CD4-positive, alpha-beta T cell (primary cell): ENCODE measurements at regions of chr3 and their contacts with region 1.

Region 1: GRCh38 chr3:68057637-68058320 is 403.4 kb upstream of the SUCLG2 start:
- DNase-seq: peak; percentile 43 to 92 (median 55)
- ATAC-seq: peak; percentile 98
- H3K4me3 ChIP-seq: peak overlapping the region; percentile 28
- H3K4me3 Mint-ChIP-seq: peak overlapping the region; percentile 80
- H3K27ac ChIP-seq: peak overlapping the region in 1 of 2 donors; percentile 3
- H3K27ac Mint-ChIP-seq: peak overlapping the region; percentile 83
- H3K4me1 ChIP-seq: peaks cover 30% of the 10 kb centered on the region
- H3K4me1 Mint-ChIP-seq: peaks cover 77% of the 10 kb centered on the region
- H3K27me3 ChIP-seq: no peaks in the 10 kb centered on the region
- H3K27me3 Mint-ChIP-seq: no peaks in the 10 kb centered on the region
- CTCF ChIP-seq: no peak

Region 2: DNA sequence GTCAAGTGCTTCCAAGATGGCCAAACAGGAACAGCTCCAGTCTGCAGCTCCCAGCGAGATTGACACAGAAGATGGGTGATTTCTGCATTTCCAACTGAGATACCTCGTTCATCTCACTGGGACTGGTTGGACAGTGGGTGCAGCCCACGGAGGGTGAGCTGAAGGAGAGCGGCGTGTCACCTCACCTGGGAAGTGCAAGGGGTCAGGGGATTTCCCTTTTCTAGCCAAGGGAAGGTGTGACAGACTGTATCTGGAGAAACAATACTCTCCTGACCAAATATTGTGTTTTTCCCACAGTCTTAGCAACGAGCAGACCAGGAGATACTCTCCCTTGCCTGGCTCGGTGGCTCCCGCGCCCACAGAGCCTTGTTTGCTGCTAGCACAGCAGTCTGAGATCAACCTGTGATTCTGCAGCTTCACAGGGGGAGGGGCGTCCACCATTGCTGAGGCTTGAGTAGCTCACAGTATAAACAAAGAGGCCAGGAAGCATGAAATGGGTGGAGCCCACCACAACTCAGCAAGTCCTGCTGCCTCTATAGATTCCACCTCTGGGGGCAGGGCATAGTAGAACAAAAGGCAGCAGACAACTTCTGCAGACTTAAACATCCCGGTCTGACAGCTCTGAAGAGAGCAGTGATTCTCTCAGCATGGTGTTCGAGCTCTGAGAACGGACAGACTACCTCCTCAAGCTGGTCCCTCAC is 109.8 kb before region 1 on chr3:
- CTCF ChIA-PET with region 1: no interaction called
- POLR2A ChIA-PET with region 1: interaction called, 18 read pairs
- intact Hi-C with region 1: no loop called
- DNase-seq: peak; percentile 52 to 89 (median 67)
- ATAC-seq: peak; percentile 95
- H3K4me3 ChIP-seq: peak overlapping the region; percentile 49
- H3K4me3 Mint-ChIP-seq: peak overlapping the region; percentile 86
- H3K27ac ChIP-seq: no peak overlapping the region
- H3K27ac Mint-ChIP-seq: peak overlapping the region; percentile 87
- H3K4me1 ChIP-seq: peaks cover 16% of the 10 kb centered on the region
- H3K4me1 Mint-ChIP-seq: peaks cover 47% of the 10 kb centered on the region
- H3K27me3 ChIP-seq: no peaks in the 10 kb centered on the region
- H3K27me3 Mint-ChIP-seq: no peaks in the 10 kb centered on the region
- CTCF ChIP-seq: peak; percentile 24

Region 3: DNA sequence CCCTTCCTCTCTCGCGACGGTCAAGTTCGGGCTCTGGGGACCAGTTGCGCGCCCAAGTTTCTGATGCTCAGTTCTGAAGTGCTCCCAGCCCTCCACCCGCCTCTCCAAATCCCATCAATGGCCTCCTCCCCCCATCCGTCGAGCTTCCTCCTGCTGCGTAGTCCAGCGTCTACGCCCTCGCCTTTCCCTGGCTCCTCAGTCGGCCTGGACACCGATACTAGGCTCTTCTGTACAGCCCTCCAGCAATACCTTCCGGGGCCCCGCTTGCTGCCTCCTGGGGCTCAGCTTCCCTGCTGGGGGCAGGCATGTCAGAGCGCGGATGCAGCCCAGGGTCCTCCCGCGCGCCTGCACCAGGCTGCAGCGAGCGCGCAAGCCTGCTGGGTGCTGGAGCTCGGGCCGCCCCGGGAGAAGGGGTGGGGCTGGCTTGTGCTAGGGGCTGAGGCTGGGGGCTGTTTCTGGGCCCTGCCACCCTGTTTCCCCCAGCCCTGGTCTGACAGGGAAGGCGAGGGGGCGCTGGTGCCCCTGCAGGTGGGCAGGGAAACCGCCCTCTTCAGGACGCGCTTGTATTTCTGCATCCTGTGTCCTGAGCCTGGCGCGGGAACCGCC is 50.1 kb before region 1 on chr3:
- CTCF ChIA-PET with region 1: no interaction called
- POLR2A ChIA-PET with region 1: interaction called, 7 read pairs
- intact Hi-C with region 1: loop called (anchors 5 kb)
- DNase-seq: peak; percentile 7 to 57 (median 20)
- ATAC-seq: peak; percentile 80
- H3K4me3 ChIP-seq: peak overlapping the region; percentile 61
- H3K4me3 Mint-ChIP-seq: peak overlapping the region; percentile 91
- H3K27ac ChIP-seq: no peak overlapping the region
- H3K27ac Mint-ChIP-seq: no peak overlapping the region
- H3K4me1 ChIP-seq: peaks cover 18% of the 10 kb centered on the region
- H3K4me1 Mint-ChIP-seq: peaks cover 25% of the 10 kb centered on the region
- H3K27me3 ChIP-seq: peaks cover 0 to 7% of the 10 kb centered on the region in 2 experiments
- H3K27me3 Mint-ChIP-seq: peaks cover 55% of the 10 kb centered on the region
- CTCF ChIP-seq: no peak